Activated CD4-positive, alpha-beta memory T cell treated with anti-CD3 and anti-CD28 coated beads for 36 hours (primary cell): ENCODE measurements at regions of chr17 and their contacts with region 1.

Region 1: GRCh38 chr17:77444984-77445759 is 304.4 kb downstream of the SEC14L1 start:
- DNase-seq: peak; percentile 91
- H3K4me3 Mint-ChIP-seq: peak overlapping the region; percentile 72
- H3K27ac Mint-ChIP-seq: peak overlapping the region; percentile 98
- H3K4me1 Mint-ChIP-seq: peaks cover 91% of the 10 kb centered on the region
- H3K27me3 Mint-ChIP-seq: no peaks in the 10 kb centered on the region

Region 2: DNA sequence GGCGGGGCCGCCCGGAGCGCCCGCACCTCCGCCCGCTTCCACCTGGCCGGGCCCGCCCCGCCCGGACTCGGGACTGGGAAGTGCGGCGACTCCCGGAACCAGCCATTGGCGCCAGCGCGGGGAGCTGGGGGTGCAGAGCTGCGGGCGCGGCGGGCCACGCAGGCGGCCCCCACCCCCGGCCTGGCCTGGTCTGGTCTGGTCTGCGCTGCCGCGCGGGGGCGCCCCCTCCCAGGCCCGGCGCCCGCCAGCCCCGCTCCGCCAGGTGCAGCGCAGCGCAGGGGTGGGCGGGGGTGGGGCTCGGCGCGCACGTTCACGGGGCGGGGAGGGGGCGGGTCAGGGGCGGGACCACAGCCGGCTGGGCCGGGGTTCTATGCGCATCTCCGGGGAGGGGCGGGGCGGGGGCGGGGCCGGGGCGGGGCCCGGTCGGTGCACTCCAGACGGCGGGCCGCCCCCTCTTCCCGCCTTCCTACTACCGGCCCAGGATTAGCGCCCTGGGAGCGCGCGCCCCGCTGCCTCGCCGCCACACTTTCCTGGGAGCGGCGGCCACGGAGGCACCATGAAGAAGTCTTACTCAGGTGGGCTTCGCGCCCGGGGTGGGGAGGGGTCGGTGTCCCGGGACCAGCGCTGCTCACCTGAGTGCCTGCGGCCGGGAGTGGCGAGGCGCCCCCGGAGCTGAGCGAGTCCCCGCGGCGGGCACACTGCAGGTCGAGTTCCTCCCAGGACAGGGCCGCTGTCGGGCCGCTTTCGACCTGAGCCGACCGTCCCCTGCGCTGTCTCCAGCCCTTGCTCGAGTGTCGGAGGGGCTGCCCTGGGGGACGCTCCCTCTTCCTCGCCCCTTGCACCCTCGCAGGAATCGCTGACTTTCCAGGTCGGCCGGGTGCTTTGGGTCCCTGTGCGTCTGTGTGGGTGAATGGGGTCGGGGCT is 163.9 kb before region 1 on chr17:
- CTCF ChIA-PET with region 1: no interaction called
- POLR2A ChIA-PET with region 1: no interaction called
- intact Hi-C with region 1: no loop called
- DNase-seq: peak; percentile 65
- H3K4me3 Mint-ChIP-seq: peak overlapping the region; percentile 70
- H3K27ac Mint-ChIP-seq: peak overlapping the region; percentile 69
- H3K4me1 Mint-ChIP-seq: peaks cover 16% of the 10 kb centered on the region
- H3K27me3 Mint-ChIP-seq: peaks cover 22% of the 10 kb centered on the region

Region 3: DNA sequence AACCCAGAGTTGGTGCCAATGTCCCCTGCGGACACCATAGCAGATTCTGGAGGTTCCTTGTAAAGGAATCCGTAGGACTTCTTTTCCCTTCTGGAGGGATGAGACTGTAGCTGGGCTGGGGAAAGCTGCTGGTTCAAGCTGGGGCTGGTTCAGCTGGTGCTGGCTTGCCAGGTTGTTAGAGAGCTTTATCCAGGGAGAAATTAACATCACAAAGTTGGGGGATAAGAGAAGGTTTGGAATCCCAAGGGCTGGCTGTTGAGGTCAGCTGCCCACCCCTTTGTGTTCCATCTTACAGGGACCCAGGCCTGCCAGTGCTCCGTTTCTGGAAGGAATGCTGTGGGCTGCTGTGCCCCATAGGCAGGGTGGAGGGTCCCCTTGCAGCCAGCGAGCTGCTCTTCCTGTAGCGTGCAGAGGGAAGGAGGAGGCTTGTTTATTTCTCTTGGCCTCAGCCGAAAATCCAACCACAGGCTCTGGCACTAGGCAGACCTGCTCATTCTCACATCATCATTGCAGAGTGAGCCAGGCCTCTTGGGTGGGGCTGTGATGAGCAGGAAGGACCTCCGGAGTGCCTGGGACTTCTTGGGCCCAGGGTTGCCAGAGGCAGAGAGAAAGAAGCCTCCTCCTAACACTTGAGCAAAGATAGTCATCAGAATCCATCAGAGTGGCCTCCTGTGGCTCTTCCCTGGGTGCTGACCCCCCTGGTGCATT is 53.4 kb before region 1 on chr17:
- CTCF ChIA-PET with region 1: interaction called, 3 read pairs
- POLR2A ChIA-PET with region 1: interaction called, 7 read pairs
- intact Hi-C with region 1: loop called (anchors 1 kb)
- DNase-seq: peak; percentile 78
- H3K4me3 Mint-ChIP-seq: peak overlapping the region; percentile 47
- H3K27ac Mint-ChIP-seq: peak overlapping the region; percentile 88
- H3K4me1 Mint-ChIP-seq: peaks cover 67% of the 10 kb centered on the region
- H3K27me3 Mint-ChIP-seq: no peaks in the 10 kb centered on the region

Region 4: DNA sequence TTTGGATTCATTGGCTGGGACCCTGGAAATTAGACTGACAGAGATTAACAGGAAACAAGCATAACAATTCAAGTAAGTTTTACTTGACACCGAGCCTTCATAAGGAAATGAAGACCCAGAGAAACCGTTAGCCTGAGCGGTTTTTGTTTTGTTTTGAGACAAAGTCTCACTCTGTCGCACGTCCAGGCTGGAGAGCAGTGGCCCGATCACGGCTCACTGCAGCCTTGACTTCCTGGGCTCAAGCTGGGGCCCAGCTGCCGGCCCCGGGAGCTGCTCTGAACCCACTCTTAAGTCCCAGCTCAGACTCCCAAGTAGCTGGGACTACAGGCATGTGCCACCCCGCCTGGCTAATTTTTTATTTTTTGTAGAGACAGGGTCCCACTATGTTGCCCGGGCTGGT is 16.9 kb after region 1 on chr17:
- CTCF ChIA-PET with region 1: interaction called, 7 read pairs
- POLR2A ChIA-PET with region 1: interaction called, 43 read pairs
- intact Hi-C with region 1: loop called (anchors 1 kb)
- DNase-seq: peak; percentile 72
- H3K4me3 Mint-ChIP-seq: peak overlapping the region; percentile 91
- H3K27ac Mint-ChIP-seq: peak overlapping the region; percentile 100
- H3K4me1 Mint-ChIP-seq: peaks cover 83% of the 10 kb centered on the region
- H3K27me3 Mint-ChIP-seq: no peaks in the 10 kb centered on the region

Region 5: GRCh38 chr17:77471984-77472461 is 26.9 kb after region 1 on chr17:
- CTCF ChIA-PET with region 1: interaction called, 22 read pairs
- POLR2A ChIA-PET with region 1: interaction called, 47 read pairs
- intact Hi-C with region 1: loop called (anchors 2 kb)
- DNase-seq: peak; percentile 32
- H3K4me3 Mint-ChIP-seq: peak overlapping the region; percentile 62
- H3K27ac Mint-ChIP-seq: peak overlapping the region; percentile 86
- H3K4me1 Mint-ChIP-seq: peaks cover 97% of the 10 kb centered on the region
- H3K27me3 Mint-ChIP-seq: no peaks in the 10 kb centered on the region

Region 6: GRCh38 chr17:77507111-77507885 is 62.1 kb after region 1 on chr17:
- CTCF ChIA-PET with region 1: no interaction called
- POLR2A ChIA-PET with region 1: no interaction called
- intact Hi-C with region 1: no loop called
- DNase-seq: no peak
- H3K4me3 Mint-ChIP-seq: no peak overlapping the region
- H3K27ac Mint-ChIP-seq: no peak overlapping the region
- H3K4me1 Mint-ChIP-seq: no peaks in the 10 kb centered on the region
- H3K27me3 Mint-ChIP-seq: no peaks in the 10 kb centered on the region

Region 7: DNA sequence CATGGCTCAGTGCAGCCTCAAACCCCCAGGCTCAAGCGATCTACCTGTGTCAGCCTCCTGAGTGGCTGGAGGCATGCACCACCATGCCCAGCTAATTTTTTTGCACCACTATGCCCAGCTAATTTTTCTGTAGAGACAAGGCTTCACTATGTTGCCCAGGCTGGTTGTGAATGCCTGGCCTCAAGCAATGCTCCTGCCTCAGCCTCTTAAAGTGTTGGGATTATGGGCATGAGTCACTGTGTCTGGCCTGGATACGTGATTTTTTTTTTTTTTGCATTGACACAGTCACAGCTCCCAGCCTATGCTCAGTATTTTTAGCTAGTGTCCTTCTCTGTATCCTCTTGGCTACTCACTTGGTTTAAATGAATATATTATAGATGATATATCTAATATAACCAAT is 136.3 kb after region 1 on chr17:
- CTCF ChIA-PET with region 1: no interaction called
- POLR2A ChIA-PET with region 1: no interaction called
- intact Hi-C with region 1: no loop called
- DNase-seq: no peak
- H3K4me3 Mint-ChIP-seq: no peak overlapping the region
- H3K27ac Mint-ChIP-seq: no peak overlapping the region
- H3K4me1 Mint-ChIP-seq: no peaks in the 10 kb centered on the region
- H3K27me3 Mint-ChIP-seq: peaks cover 1% of the 10 kb centered on the region